Ascending aorta (tissue), 2 donors: ENCODE measurements at regions of chr6 and their contacts with region 1.

Region 1: DNA sequence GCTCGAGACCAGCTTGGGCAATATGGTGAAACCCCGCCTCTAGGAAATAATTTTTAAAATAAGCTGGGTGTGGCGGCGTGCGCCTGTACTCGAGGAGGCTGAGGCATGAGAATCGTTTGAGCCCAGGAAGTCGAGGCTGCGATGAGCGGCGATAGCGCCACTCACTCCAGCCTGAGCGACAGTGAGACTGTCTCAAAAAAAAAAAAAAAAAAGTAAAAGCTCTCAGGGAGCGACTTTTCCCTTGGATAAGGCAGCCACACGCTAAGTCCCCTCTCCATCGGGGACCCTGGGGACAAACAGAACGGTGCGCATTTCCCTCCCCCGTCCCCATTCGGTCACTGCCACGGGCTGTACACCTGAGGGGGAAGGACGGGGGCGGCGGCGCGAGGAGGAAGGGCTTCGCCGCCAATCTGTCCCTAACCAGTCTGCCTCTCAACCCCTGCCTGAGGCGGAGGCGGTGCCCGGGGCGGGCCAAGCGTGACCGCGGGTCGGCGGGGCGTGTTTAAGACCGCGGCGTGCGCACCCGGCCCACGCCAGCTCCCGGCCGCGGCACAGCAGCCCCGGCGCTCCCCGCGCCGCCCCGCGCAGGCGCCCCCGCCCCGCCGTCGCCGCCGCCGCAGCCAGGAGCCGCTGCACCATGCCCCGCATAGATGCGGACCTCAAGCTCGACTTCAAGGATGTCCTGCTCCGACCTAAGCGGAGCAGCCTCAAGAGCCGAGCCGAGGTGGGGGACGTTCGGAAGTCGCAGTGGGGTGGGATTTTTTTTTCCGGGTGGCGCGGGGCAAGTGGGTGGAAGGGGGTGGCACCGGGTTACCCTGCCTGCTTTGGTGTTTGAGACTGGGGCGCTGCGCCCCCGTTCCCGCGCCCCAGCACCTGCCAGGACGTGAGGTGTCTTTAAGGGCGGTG is at the start of gene GMPR:
- DNase-seq: peak; percentile 52 to 94
- H3K4me3 ChIP-seq: peak within 1 kb of the TSS; percentile 73 to 95
- H3K27ac ChIP-seq: peak within 1 kb of the TSS; percentile 86 to 87
- H3K4me1 ChIP-seq: peaks cover 4 to 45% of the 10 kb centered on the region in 2 donors
- H3K27me3 ChIP-seq: no peaks in the 10 kb centered on the region
- CTCF ChIP-seq: peak in 1 of 3 experiments; percentile 5
- total RNA-seq, gene GMPR: 18.4 TPM

Region 2: DNA sequence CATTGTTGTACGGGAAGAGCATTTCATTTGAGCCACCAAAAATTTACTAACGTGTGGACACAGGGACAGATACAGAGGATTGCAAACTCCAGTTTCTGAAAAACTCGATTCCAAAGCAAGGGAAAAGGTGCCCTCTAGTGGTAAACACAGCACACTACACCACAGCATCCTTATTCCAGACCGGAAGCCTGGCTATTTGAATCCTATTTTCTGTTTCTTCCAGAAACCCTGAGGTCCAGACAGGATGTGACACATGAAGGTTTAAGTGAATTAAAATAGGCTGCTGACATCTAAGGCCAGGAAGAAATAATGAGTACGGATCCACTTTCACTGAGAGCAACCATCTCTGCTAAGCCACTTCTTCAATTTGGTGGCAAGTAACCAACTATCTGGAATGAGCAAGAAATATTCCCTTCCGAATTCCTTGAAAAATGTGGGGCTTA is 31.7 kb before region 1 on chr6:
- intact Hi-C with region 1: loop called (anchors 5 kb)
- DNase-seq: peak in 1 of 2 donors; percentile 88
- H3K4me3 ChIP-seq: no peak overlapping the region
- H3K27ac ChIP-seq: peak overlapping the region; percentile 65 to 76
- H3K4me1 ChIP-seq: peaks cover 0 to 21% of the 10 kb centered on the region in 2 donors
- H3K27me3 ChIP-seq: no peaks in the 10 kb centered on the region
- CTCF ChIP-seq: peak; percentile 92 to 96 (median 95)

Region 3: DNA sequence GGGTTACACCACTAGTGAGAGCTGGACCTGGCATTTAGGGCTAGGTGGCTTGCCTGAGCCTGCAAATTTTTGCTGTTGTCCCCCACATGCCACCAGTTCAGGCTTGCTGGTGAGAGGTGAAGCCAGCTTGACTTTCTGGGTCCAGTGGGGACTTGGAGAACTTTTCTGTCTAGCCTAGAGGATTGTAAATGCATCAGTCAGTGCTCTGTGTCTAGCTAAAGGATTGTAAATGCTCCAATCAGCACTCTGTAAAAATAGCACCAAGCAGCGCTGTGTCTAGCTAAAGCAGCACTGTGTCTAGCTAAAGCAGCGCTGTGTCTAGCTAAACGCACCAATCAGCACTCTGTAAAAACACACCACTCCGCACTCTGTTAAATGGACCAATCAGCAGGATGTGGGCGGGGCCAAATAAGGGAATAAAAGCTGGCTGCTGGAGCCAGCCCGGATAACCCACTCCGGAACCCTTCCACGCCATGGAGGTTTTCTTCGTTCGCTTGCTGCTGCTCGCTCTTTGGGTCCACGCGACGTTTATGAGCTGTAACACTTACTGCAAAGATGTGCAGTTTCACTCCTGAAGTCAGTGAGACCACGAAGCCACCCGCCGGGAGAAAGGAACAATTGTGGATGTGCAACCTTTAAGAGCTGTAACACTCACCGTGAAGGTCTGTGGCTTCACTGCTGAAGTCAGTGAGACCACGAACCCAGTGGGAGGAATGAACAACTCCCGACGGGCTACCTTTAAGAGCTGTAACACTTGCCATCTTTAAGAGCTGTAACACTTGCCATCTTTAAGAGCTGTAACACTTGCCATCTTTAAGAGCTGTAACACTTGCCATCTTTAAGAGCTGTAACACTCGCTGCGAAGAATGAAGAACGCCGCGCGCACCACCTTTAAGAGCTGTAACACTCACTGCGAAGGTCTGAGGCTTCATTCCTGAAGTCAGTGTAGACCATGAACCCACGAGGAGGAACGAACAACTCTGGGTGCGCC is 27.3 kb after region 1 on chr6:
- intact Hi-C with region 1: no loop called
- DNase-seq: no peak
- H3K4me3 ChIP-seq: no peak overlapping the region
- H3K27ac ChIP-seq: no peak overlapping the region
- H3K4me1 ChIP-seq: no peaks in the 10 kb centered on the region
- H3K27me3 ChIP-seq: no peaks in the 10 kb centered on the region
- CTCF ChIP-seq: no peak

Region 4: GRCh38 chr6:16277101-16277981 is 39.0 kb after region 1 on chr6:
- intact Hi-C with region 1: loop called (anchors 1 kb)
- DNase-seq: peak; percentile 86 to 94
- H3K4me3 ChIP-seq: peak overlapping the region in 1 of 2 donors; percentile 31
- H3K27ac ChIP-seq: peak overlapping the region; percentile 76 to 79
- H3K4me1 ChIP-seq: peaks cover 5 to 14% of the 10 kb centered on the region in 2 donors
- H3K27me3 ChIP-seq: no peaks in the 10 kb centered on the region
- CTCF ChIP-seq: peak; percentile 59 to 70 (median 64)

Region 5: GRCh38 chr6:16319813-16320532 is 81.7 kb after region 1 on chr6:
- intact Hi-C with region 1: loop called (anchors 2 kb)
- DNase-seq: peak; percentile 88 to 94
- H3K4me3 ChIP-seq: peak overlapping the region; percentile 42 to 56
- H3K27ac ChIP-seq: peak overlapping the region; percentile 96
- H3K4me1 ChIP-seq: peaks cover 11 to 63% of the 10 kb centered on the region in 2 donors
- H3K27me3 ChIP-seq: no peaks in the 10 kb centered on the region
- CTCF ChIP-seq: no peak

Region 6: GRCh38 chr6:16548121-16548520 is 309.8 kb after region 1 on chr6:
- intact Hi-C with region 1: no loop called
- DNase-seq: no peak
- H3K4me3 ChIP-seq: no peak overlapping the region
- H3K27ac ChIP-seq: no peak overlapping the region
- H3K4me1 ChIP-seq: peaks cover 8 to 17% of the 10 kb centered on the region in 2 donors
- H3K27me3 ChIP-seq: no peaks in the 10 kb centered on the region
- CTCF ChIP-seq: no peak